ENCODE measurements at regions of chr13 and their contacts with region 1.

Region 1: GRCh38 chr13:72495681-72496080 is 231.7 kb downstream of the MZT1 start:
- DNase-seq: no peak
- H3K4me3 ChIP-seq: no peak overlapping the region
- CTCF ChIP-seq: no peak

Region 2: GRCh38 chr13:72458701-72459100 is 37.0 kb before region 1 on chr13:
- in situ Hi-C with region 1: loop called (anchors 5 kb)
- DNase-seq: peak; percentile 16
- H3K4me3 ChIP-seq: no peak overlapping the region
- CTCF ChIP-seq: no peak